Heart left ventricle (tissue), 16 donors: ENCODE measurements at regions of chr9 and their contacts with region 1.

Region 1: DNA sequence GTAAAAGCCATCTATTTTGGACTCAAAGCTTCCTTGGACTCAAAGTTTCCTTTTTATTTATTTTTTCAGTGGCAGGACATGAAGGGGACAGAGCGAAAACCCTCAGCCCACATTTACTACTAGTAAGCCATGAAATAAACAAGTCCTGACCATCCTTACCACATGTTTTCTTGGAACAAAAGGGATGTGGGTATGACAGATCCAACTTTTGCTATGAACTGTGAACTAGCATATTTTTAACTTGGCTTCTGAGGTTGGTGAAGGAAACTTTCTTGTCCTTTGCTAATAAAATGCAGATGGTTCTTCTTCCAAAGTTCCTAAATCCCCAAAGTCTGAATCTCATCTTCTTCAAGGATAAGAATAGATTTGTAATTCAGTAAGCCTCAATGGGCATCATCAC is 122.7 kb upstream of the TNC start:
- DNase-seq: no peak
- ATAC-seq: no peak
- H3K4me3 ChIP-seq: no peak overlapping the region
- H3K27ac ChIP-seq: no peak overlapping the region
- H3K4me1 ChIP-seq: peaks cover 0 to 6% (median 0%) of the 10 kb centered on the region in 12 donors
- H3K27me3 ChIP-seq: no peaks in the 10 kb centered on the region
- CTCF ChIP-seq: no peak
- POLR2A ChIP-seq: no peak

Region 2: DNA sequence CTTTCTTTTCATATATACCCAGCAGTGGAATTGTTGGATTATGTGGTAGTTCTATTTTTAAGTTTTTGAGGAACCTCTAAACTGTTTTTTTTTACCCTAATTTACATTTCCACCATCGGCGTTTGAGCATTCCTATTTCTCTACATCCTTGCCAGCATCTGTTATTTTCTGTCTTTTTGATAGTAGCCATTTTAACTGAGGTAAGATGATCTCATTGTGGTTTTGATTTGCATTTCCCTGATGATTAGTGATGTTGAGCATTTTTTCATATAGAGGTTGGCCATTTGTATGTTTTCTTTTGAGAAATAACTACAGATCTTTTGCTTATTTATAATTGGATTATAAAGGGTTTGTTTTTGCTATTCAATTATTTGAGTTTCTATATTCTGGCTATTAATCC is 51.0 kb before region 1 on chr9:
- intact Hi-C with region 1: loop called in 1 of 10 experiments (anchors 2 kb)
- DNase-seq: no peak
- ATAC-seq: no peak
- H3K4me3 ChIP-seq: no peak overlapping the region
- H3K27ac ChIP-seq: no peak overlapping the region
- H3K4me1 ChIP-seq: no peaks in the 10 kb centered on the region
- H3K27me3 ChIP-seq: no peaks in the 10 kb centered on the region
- CTCF ChIP-seq: no peak
- POLR2A ChIP-seq: no peak